ENCODE measurements at regions of chr15 and their contacts with region 1.

Region 1: GRCh38 chr15:78979456-78980320 is 34.8 kb upstream of the CTSH start:
- DNase-seq: no peak
- H3K4me3 ChIP-seq: no peak overlapping the region
- H3K27ac ChIP-seq: no peak overlapping the region
- H3K4me1 ChIP-seq: peaks cover 0 to 8% (median 3%) of the 10 kb centered on the region in 3 donors
- H3K27me3 ChIP-seq: no peaks in the 10 kb centered on the region
- CTCF ChIP-seq: peak; percentile 17 to 80 (median 68)
- POLR2A ChIP-seq: no peak

Region 2: DNA sequence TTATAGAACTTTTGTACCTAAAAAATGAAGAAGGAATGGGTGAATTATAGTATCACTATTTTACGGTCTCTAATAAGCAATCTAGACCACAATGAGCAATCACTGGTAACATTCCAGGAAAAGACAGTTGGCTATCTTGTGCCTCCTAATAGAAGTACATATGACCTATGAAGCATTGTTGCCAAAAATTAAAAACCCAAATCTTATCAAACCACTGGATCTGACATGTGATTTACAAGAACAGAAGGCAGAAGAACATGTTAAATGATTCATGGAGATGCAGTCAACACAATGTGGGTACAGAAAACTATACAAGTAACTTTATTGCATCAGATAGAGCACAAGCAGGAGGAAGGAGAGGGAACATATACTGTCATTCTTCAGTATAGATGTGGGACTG is 486.8 kb before region 1 on chr15:
- intact Hi-C with region 1: no loop called
- DNase-seq: no peak
- H3K4me3 ChIP-seq: no peak overlapping the region
- H3K27ac ChIP-seq: no peak overlapping the region
- H3K4me1 ChIP-seq: no peaks in the 10 kb centered on the region
- H3K27me3 ChIP-seq: no peaks in the 10 kb centered on the region
- CTCF ChIP-seq: no peak
- POLR2A ChIP-seq: no peak

Region 3: GRCh38 chr15:78909791-78910228 is 69.9 kb before region 1 on chr15:
- intact Hi-C with region 1: loop called (anchors 5 kb)
- DNase-seq: no peak
- H3K4me3 ChIP-seq: no peak overlapping the region
- H3K27ac ChIP-seq: no peak overlapping the region
- H3K4me1 ChIP-seq: peaks cover 5 to 28% (median 10%) of the 10 kb centered on the region in 3 donors
- H3K27me3 ChIP-seq: no peaks in the 10 kb centered on the region
- CTCF ChIP-seq: peak; percentile 48 to 72 (median 60)
- POLR2A ChIP-seq: no peak